T-cell (primary cell): ENCODE measurements at regions of chr4 and their contacts with region 1.

Region 1: DNA sequence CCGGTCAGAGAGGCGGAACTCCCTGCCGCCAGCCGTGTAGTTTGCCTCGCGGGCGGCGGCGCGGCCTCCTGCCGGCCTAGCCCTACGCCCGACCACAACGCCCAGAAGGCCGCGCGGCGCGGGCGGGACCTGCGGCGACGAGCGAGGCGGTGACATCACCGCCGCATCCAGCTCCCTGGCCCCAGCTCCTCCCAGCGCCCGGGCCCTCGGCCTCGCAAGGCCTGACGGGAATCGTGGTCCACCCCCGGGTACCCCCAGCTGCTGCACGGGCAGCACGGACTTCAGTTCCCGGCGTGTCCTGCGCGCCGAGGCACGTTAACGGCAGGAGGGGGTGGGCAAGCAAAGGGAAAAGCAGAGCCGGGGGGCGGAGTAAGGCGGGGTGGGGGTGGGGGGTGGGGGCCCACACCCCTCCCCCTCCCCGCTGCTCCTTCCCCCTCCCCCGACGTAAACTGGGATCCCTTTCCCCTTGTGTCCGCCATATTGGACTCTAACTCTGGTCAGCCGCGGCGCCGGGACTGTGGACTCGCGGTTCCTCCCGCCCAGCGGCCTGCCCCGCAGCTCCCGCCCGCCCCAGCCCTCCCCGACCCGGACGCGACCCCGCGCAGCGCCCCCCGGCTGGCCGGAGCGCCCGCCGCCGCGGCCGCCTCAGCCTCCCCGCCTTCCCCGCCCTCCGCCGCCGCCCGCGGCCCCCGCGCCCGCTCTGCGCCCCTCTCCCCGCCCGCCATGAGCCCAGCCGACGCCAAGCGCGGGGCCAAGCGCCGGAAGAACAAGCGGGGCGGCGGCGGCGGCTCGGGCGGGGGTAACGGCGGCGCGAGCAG is at the start of gene FAM193A:
- DNase-seq: peak; percentile 94 to 100 (median 99)
- ATAC-seq: peak; percentile 92 to 95 (median 92)
- H3K4me3 ChIP-seq: peak within 1 kb of the TSS; percentile 61 to 80
- H3K4me3 Mint-ChIP-seq: peak within 1 kb of the TSS; percentile 85 to 93 (median 85)
- H3K27ac ChIP-seq: peak within 1 kb of the TSS; percentile 64
- H3K27ac Mint-ChIP-seq: peak within 1 kb of the TSS; percentile 87 to 90
- H3K4me1 ChIP-seq: peaks cover 3 to 31% of the 10 kb centered on the region in 2 experiments
- H3K4me1 Mint-ChIP-seq: peaks cover 23 to 31% (median 31%) of the 10 kb centered on the region in 3 donors
- H3K27me3 ChIP-seq: peaks cover 0 to 3% of the 10 kb centered on the region in 2 experiments
- H3K27me3 Mint-ChIP-seq: no peaks in the 10 kb centered on the region
- total RNA-seq, gene FAM193A: 41.6 to 46.8 (median 45.2) TPM

Region 2: DNA sequence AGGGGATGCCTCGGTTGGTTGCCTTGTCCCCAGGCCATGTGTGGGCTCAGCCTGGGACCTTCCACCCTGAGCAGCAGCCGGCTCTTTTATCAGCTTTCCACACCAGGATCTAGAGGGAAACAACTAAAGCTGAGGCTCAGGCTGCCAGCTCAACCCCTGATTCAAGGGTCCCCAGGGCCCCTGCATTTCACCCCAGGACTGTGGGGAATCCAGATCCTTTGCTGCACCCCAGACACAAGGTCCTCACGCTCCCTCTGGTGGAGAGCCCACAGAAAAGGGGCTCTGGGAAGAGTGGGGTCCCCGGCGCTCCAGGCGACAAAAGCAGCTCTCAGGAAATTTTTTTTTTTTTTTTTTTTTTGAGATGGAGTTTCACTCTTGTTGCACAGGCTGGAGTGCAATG is 182.3 kb before region 1 on chr4:
- CTCF ChIA-PET with region 1: no interaction called
- POLR2A ChIA-PET with region 1: no interaction called
- DNase-seq: peak in 26 of 35 experiments; percentile 8 to 63 (median 32)
- ATAC-seq: peak in 3 of 4 experiments; percentile 54 to 82 (median 58)
- H3K4me3 ChIP-seq: no peak overlapping the region
- H3K4me3 Mint-ChIP-seq: no peak overlapping the region
- H3K27ac ChIP-seq: no peak overlapping the region
- H3K27ac Mint-ChIP-seq: no peak overlapping the region
- H3K4me1 ChIP-seq: peaks cover 0 to 19% of the 10 kb centered on the region in 2 experiments
- H3K4me1 Mint-ChIP-seq: peaks cover 8 to 16% (median 10%) of the 10 kb centered on the region in 3 donors
- H3K27me3 ChIP-seq: no peaks in the 10 kb centered on the region
- H3K27me3 Mint-ChIP-seq: no peaks in the 10 kb centered on the region

Region 3: DNA sequence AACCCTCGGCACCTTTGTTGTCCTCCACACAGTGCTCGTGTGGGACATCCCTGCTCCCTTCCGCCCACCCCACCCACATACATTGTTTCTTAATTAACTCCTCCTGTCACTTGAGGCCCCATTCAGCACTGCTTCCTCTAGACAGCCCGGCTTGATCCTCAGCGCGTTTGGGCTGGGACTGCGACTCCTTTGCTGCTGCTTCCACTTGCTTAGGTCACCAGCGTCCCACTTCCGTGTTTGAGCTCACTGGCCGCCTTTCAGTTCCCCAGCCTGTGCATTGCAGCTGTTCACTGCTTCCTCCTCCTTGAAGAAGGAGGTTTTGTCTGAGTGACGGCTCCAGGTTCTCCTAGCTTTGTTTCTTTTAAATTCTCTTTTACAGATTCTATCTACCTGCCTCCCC is 51.4 kb before region 1 on chr4:
- CTCF ChIA-PET with region 1: interaction called in 1 of 2 experiments, 4 read pairs
- POLR2A ChIA-PET with region 1: interaction called, 3 to 10 read pairs
- DNase-seq: peak; percentile 37 to 85 (median 70)
- ATAC-seq: peak; percentile 88 to 93 (median 90)
- H3K4me3 ChIP-seq: peak overlapping the region; percentile 20 to 29
- H3K4me3 Mint-ChIP-seq: peak overlapping the region; percentile 73 to 76 (median 73)
- H3K27ac ChIP-seq: peak overlapping the region; percentile 62
- H3K27ac Mint-ChIP-seq: peak overlapping the region; percentile 83
- H3K4me1 ChIP-seq: peaks cover 46 to 88% of the 10 kb centered on the region in 2 experiments
- H3K4me1 Mint-ChIP-seq: peaks cover 81 to 88% (median 88%) of the 10 kb centered on the region in 3 donors
- H3K27me3 ChIP-seq: no peaks in the 10 kb centered on the region
- H3K27me3 Mint-ChIP-seq: no peaks in the 10 kb centered on the region

Region 4: GRCh38 chr4:2598511-2599303 is 62.3 kb after region 1 on chr4:
- CTCF ChIA-PET with region 1: no interaction called
- POLR2A ChIA-PET with region 1: no interaction called
- DNase-seq: peak in 14 of 35 experiments; percentile 2 to 35 (median 7)
- ATAC-seq: peak; percentile 48 to 76 (median 73)
- H3K4me3 ChIP-seq: no peak overlapping the region
- H3K4me3 Mint-ChIP-seq: peak overlapping the region in 1 of 3 donors; percentile 3
- H3K27ac ChIP-seq: no peak overlapping the region
- H3K27ac Mint-ChIP-seq: peak overlapping the region; percentile 85 to 88
- H3K4me1 ChIP-seq: peaks cover 0 to 21% of the 10 kb centered on the region in 2 experiments
- H3K4me1 Mint-ChIP-seq: peaks cover 62 to 63% (median 63%) of the 10 kb centered on the region in 3 donors
- H3K27me3 ChIP-seq: no peaks in the 10 kb centered on the region
- H3K27me3 Mint-ChIP-seq: no peaks in the 10 kb centered on the region

Region 5: GRCh38 chr4:3480528-3481112 is 944.2 kb after region 1 on chr4:
- CTCF ChIA-PET with region 1: no interaction called
- POLR2A ChIA-PET with region 1: no interaction called
- DNase-seq: peak; percentile 22 to 75 (median 62)
- ATAC-seq: peak; percentile 68 to 81 (median 73)
- H3K4me3 ChIP-seq: no peak overlapping the region
- H3K4me3 Mint-ChIP-seq: no peak overlapping the region
- H3K27ac ChIP-seq: no peak overlapping the region
- H3K27ac Mint-ChIP-seq: no peak overlapping the region
- H3K4me1 ChIP-seq: peaks cover 0 to 28% of the 10 kb centered on the region in 2 experiments
- H3K4me1 Mint-ChIP-seq: peaks cover 0 to 6% (median 1%) of the 10 kb centered on the region in 3 donors
- H3K27me3 ChIP-seq: peaks cover 0 to 95% of the 10 kb centered on the region in 2 experiments
- H3K27me3 Mint-ChIP-seq: peaks cover 13 to 36% of the 10 kb centered on the region in 2 donors